B cell (primary cell): ENCODE measurements at regions of chr4 and their contacts with region 1.

Region 1: GRCh38 chr4:184417802-184418511 is 56.4 kb downstream of the IRF2 start:
- DNase-seq: peak; percentile 16
- ATAC-seq: peak; percentile 43
- H3K4me3 ChIP-seq: peak overlapping the region in 2 of 5 experiments; percentile 12 to 55
- H3K4me3 Mint-ChIP-seq: peak overlapping the region; percentile 48
- H3K27ac ChIP-seq: peak overlapping the region; percentile 79 to 84
- H3K27ac Mint-ChIP-seq: peak overlapping the region; percentile 91
- H3K4me1 ChIP-seq: peaks cover 45 to 57% of the 10 kb centered on the region in 2 donors
- H3K4me1 Mint-ChIP-seq: peaks cover 78% of the 10 kb centered on the region
- H3K27me3 ChIP-seq: no peaks in the 10 kb centered on the region
- H3K27me3 Mint-ChIP-seq: no peaks in the 10 kb centered on the region
- CTCF ChIP-seq: no peak

Region 2: GRCh38 chr4:184287697-184288255 is 130.2 kb before region 1 on chr4:
- CTCF ChIA-PET with region 1: interaction called, 6 read pairs
- POLR2A ChIA-PET with region 1: no interaction called
- intact Hi-C with region 1: loop called (anchors 5 kb)
- DNase-seq: peak; percentile 30
- ATAC-seq: no peak
- H3K4me3 ChIP-seq: peak overlapping the region in 1 of 5 experiments; percentile 22
- H3K4me3 Mint-ChIP-seq: peak overlapping the region; percentile 66
- H3K27ac ChIP-seq: peak overlapping the region in 1 of 2 donors; percentile 20
- H3K27ac Mint-ChIP-seq: peak overlapping the region; percentile 71
- H3K4me1 ChIP-seq: peaks cover 35 to 36% of the 10 kb centered on the region in 2 donors
- H3K4me1 Mint-ChIP-seq: peaks cover 46% of the 10 kb centered on the region
- H3K27me3 ChIP-seq: no peaks in the 10 kb centered on the region
- H3K27me3 Mint-ChIP-seq: no peaks in the 10 kb centered on the region
- CTCF ChIP-seq: no peak

Region 3: GRCh38 chr4:184437565-184438265 is 19.8 kb after region 1 on chr4:
- CTCF ChIA-PET with region 1: interaction called, 3 read pairs
- POLR2A ChIA-PET with region 1: no interaction called
- intact Hi-C with region 1: loop called (anchors 2 kb)
- DNase-seq: peak; percentile 52
- ATAC-seq: peak; percentile 61
- H3K4me3 ChIP-seq: no peak overlapping the region
- H3K4me3 Mint-ChIP-seq: peak overlapping the region; percentile 66
- H3K27ac ChIP-seq: peak overlapping the region; percentile 35 to 50
- H3K27ac Mint-ChIP-seq: peak overlapping the region; percentile 78
- H3K4me1 ChIP-seq: peaks cover 36 to 41% of the 10 kb centered on the region in 2 donors
- H3K4me1 Mint-ChIP-seq: peaks cover 67% of the 10 kb centered on the region
- H3K27me3 ChIP-seq: no peaks in the 10 kb centered on the region
- H3K27me3 Mint-ChIP-seq: no peaks in the 10 kb centered on the region
- CTCF ChIP-seq: no peak

Region 4: DNA sequence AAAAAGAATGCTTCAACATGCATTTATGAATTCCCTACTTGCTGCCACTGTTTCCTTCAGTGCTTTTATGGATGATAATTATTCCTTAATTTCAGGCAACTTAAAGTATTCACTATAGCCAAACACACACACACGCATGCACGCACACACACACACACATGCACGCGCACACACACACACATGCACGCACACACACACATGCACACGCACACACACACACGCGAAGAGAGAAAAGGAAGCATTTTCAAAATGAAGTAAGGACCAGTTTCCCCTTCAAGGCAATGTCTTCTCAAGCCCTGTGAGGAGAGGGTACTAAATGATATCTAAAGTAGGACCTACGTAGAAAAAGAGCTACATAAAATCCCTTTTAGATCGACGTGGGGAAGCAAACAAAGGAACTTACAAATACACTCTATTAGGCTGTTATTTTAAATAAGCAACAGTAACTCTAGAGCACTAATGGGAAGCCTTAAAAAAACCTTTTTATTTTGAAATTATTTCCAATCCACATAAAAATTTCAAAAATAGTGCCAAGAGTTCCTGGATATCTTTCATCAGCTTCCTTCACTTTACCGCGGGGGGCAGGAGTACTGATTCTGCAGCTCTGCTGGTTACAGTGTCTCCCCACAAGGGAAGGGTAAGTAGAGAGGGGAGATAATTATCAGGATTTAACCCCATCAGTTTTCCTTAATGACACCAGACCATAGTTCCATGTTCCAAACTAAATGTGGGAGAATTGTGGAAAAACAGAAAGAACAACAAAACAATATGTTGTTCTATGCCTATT is 42.7 kb after region 1 on chr4:
- CTCF ChIA-PET with region 1: interaction called, 3 read pairs
- POLR2A ChIA-PET with region 1: interaction called, 3 read pairs
- intact Hi-C with region 1: loop called (anchors 2 kb)
- DNase-seq: peak; percentile 49
- ATAC-seq: no peak
- H3K4me3 ChIP-seq: peak overlapping the region in 2 of 5 experiments; percentile 10 to 28
- H3K4me3 Mint-ChIP-seq: peak overlapping the region; percentile 73
- H3K27ac ChIP-seq: peak overlapping the region; percentile 2 to 77
- H3K27ac Mint-ChIP-seq: peak overlapping the region; percentile 86
- H3K4me1 ChIP-seq: peaks cover 69 to 81% of the 10 kb centered on the region in 2 donors
- H3K4me1 Mint-ChIP-seq: peaks cover 92% of the 10 kb centered on the region
- H3K27me3 ChIP-seq: no peaks in the 10 kb centered on the region
- H3K27me3 Mint-ChIP-seq: no peaks in the 10 kb centered on the region
- CTCF ChIP-seq: no peak

Region 5: GRCh38 chr4:184733654-184734524 is 315.9 kb after region 1 on chr4 and contains the start of gene CENPU:
- CTCF ChIA-PET with region 1: no interaction called
- POLR2A ChIA-PET with region 1: no interaction called
- intact Hi-C with region 1: loop called (anchors 10 kb)
- DNase-seq: peak; percentile 96
- ATAC-seq: peak; percentile 95
- H3K4me3 ChIP-seq: peak within 1 kb of the TSS; percentile 65 to 76 (median 72)
- H3K4me3 Mint-ChIP-seq: peak within 1 kb of the TSS; percentile 93
- H3K27ac ChIP-seq: peak within 1 kb of the TSS; percentile 1 to 52
- H3K27ac Mint-ChIP-seq: peak within 1 kb of the TSS; percentile 93
- H3K4me1 ChIP-seq: peaks cover 7 to 12% of the 10 kb centered on the region in 2 donors
- H3K4me1 Mint-ChIP-seq: peaks cover 16% of the 10 kb centered on the region
- H3K27me3 ChIP-seq: no peaks in the 10 kb centered on the region
- H3K27me3 Mint-ChIP-seq: no peaks in the 10 kb centered on the region
- CTCF ChIP-seq: no peak
- total RNA-seq, gene CENPU: 1.6 and 3.2 TPM in 2 replicates